ENCODE measurements at regions of chr7 and their contacts with region 1.

Region 1: DNA sequence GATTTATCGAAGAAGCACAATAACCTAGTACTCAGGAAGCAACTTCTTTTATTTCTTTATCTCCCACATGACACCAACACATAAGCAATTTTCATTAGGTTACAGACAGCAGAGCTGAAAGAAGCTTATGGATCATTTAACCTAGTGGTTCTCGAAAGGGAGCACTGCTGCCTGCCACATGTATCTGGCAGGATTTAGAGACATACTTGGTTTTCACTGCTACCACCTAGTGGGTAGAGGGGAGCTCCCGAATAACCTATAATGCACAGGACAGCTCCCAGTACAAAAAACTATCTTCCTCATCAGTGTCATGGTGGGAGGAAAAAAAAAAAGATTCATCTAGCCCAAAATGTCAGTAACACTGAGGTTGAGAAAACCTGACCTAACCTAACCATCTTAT is 34.5 kb downstream of the FZD9 start:
- DNase-seq: no peak

Region 2: DNA sequence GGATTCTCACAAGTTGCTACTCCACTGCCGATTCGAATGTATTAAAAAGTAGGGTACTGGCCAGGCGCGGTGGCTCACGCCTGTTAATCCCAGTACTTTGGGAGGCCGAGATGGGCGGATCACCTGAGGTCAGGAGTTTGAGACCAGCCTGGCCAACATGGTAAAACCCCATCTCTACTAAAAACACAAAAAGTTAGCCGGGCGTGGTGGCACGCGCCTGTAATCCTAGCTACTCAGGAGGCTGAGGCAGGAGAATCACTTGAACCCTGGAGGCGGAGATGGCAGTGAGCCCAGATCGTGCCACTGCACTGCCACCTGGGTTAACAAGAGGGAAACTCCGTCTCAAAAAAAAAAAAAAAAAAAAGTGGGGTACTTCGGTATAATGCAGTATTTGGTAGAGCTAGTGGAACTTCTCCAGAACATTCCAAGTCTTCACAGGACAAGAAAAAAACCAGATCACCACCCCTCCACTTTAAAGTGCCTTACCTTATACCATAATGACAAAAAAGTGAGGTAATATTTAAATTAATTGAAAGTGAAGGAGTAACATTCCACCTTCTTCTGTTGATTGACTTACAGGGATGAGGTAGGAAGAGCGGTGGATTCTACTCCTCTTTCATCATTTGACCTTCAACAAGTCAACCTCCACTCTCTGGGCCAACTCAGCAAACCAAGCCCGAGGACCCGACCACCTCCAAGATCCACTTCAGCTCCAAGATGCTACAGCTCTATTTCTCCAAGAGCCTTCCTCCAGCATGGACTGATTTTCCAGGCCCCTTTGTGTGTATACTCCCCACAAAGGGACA is 52.0 kb after region 1 on chr7:
- in situ Hi-C with region 1: loop called (anchors 10 kb)
- DNase-seq: peak; percentile 19

Measured in ACHN (cell line).